ENCODE measurements at regions of chrX and their contacts with region 1.

Region 1: DNA sequence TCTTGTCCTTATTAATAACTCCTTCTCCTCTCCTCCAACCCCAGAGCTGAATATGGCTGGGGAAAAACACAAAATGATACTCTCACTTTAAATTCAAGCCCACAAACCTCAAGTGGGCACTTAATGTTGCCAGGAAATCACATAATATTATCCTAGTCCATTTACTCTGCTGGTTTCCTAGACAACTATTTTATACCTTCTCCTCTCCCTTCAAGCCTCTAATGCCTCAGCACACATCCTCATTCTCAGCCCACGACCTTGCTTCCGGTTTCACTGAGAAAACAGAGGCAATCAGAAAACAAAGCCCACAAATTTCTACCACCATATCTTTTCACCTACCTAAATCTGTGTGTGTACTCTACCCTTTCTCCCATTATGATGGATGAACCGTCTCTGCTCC is 12.1 kb upstream of the CLCN5 start:
- DNase-seq: no peak
- ATAC-seq: no peak
- H3K4me3 ChIP-seq: no peak overlapping the region
- H3K27ac ChIP-seq: no peak overlapping the region
- H3K4me1 ChIP-seq: peaks cover 19% of the 10 kb centered on the region
- H3K27me3 ChIP-seq: no peaks in the 10 kb centered on the region
- CTCF ChIP-seq: no peak
- EP300 ChIP-seq: no peak
- POLR2A ChIP-seq: no peak
- RAD21 ChIP-seq: no peak

Region 2: DNA sequence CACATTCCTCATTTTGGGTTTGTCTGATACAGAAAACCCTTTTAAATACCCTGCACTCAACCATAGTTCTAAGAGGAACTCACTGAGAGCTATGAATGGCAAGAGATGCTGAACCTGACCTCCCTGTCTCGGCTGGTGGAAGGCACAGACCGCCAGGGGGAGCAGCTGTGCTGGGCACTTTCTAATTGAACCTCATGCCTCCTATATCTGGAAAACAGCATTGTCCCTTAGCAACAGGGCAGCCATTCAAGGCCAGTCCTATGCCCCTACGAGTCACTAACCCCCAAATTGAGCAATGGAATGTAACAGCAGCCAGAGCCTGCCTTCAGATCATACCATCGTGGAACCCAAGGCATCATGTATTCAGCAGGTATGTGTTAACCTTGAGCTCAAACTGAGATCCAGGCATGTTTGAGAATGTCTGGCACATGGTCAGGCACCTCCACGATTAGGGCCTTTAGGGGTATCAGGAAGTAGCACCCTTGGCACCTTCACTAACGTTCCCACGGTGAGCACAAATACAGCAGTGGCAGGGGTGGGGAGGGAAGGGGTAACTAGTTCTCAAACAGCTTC is 26.0 kb before region 1 on chrX:
- CTCF ChIA-PET with region 1: interaction called, 4 read pairs
- POLR2A ChIA-PET with region 1: interaction called, 6 read pairs
- in situ Hi-C with region 1: no loop called
- intact Hi-C with region 1: loop called (anchors 2 kb)
- DNase-seq: peak; percentile 40
- ATAC-seq: peak; percentile 62
- H3K4me3 ChIP-seq: no peak overlapping the region
- H3K27ac ChIP-seq: peak overlapping the region; percentile 33
- H3K4me1 ChIP-seq: peaks cover 44% of the 10 kb centered on the region
- H3K27me3 ChIP-seq: no peaks in the 10 kb centered on the region; a peak in 1 of 5 replicates
- CTCF ChIP-seq: peak; percentile 74
- EP300 ChIP-seq: no peak
- POLR2A ChIP-seq: no peak
- RAD21 ChIP-seq: peak; percentile 39; the same call in 1 of the 2 replicates

Measured in HepG2 (cell line).